ENCODE measurements at regions of chr3 and their contacts with region 1.

Region 1: DNA sequence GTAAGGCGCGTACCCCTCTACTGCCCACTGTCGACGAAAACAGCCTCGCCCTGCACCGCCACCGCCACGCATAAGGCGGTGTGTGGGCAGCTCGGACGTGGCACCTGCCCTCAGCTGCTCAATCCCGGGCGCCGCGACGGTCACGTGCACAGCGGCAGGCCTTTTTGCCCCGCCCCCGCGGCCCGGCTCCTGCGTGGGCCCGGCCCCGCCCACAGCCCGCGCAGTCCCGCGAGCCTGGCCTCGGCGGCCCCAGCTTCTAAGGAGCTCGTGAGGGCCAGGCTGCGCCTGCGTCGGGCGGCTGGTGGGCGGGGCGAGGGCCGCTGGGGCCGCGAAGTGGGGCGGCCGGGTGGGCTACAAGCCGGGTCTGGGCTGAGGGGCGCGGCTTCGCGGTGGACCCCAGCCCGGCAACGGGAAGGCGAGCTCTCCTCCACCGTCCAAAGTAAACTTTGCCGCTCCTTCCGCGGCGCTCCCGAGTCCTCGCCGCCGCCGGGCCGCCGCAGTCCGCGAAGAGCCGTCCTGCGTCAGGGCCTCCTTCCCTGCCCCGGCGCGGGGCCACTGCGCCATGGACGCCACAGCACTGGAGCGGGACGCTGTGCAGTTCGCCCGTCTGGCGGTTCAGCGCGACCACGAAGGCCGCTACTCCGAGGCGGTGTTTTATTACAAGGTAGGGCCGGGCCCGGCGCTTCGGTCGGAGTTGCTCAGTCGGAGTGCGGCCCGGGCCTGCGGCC is at the start of gene CAPN7:
- DNase-seq: peak; percentile 97
- ATAC-seq: peak; percentile 90 to 98 (median 91)
- H3K4me3 ChIP-seq: peak within 1 kb of the TSS; percentile 71
- H3K4me3 Mint-ChIP-seq: peak within 1 kb of the TSS; percentile 92
- H3K27ac ChIP-seq: peak within 1 kb of the TSS; percentile 88
- H3K27ac Mint-ChIP-seq: peak within 1 kb of the TSS; percentile 93 to 96
- H3K4me1 ChIP-seq: peaks cover 13% of the 10 kb centered on the region
- H3K4me1 Mint-ChIP-seq: peaks cover 24 to 36% of the 10 kb centered on the region in 2 donors
- H3K27me3 ChIP-seq: no peaks in the 10 kb centered on the region
- H3K27me3 Mint-ChIP-seq: no peaks in the 10 kb centered on the region
- CTCF ChIP-seq: peak; percentile 15
- total RNA-seq, gene CAPN7: 35.3 to 59.9 (median 52.8) TPM

Region 2: DNA sequence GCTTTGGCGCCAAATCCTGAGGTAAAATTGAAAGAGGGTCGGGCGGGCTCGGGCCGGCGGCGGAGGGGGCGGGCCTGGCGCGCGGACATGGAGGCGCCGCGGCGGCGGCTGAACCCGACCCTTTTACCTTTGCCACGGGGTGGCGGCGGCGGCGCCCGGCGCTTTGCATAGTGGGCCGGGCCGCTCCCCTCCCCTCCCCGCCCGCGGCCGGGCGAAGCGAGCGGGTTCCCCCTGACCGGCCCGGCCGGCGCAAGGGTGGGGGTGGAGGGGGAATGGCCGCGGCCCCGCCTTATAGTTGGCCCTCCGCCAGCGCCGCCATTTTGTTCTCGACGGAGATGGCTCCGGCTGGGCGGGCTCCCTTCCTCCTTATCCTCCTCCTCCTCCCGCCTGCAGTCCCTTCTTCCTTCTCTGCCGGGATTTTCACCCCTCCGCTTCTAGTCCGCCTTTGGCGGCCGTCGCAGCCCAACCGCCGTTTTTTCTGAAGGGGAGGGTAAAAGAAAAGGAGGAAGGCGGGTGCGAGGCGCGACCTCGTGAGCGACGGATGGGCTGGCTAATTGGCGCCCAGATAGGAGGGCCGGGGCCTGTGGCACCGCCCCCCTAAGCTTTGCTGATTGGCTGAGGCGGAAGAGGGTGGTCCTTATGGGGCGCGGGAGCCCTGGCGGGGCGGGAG is 258.1 kb before region 1 on chr3:
- intact Hi-C with region 1: loop called (anchors 2 kb)
- DNase-seq: peak; percentile 98
- ATAC-seq: peak; percentile 85 to 95 (median 86)
- H3K4me3 ChIP-seq: peak overlapping the region; percentile 100
- H3K4me3 Mint-ChIP-seq: peak overlapping the region; percentile 98
- H3K27ac ChIP-seq: peak overlapping the region; percentile 100
- H3K27ac Mint-ChIP-seq: peak overlapping the region; percentile 98 to 100
- H3K4me1 ChIP-seq: peaks cover 13% of the 10 kb centered on the region
- H3K4me1 Mint-ChIP-seq: peaks cover 35 to 49% of the 10 kb centered on the region in 2 donors
- H3K27me3 ChIP-seq: no peaks in the 10 kb centered on the region
- H3K27me3 Mint-ChIP-seq: no peaks in the 10 kb centered on the region
- CTCF ChIP-seq: no peak

Region 3: DNA sequence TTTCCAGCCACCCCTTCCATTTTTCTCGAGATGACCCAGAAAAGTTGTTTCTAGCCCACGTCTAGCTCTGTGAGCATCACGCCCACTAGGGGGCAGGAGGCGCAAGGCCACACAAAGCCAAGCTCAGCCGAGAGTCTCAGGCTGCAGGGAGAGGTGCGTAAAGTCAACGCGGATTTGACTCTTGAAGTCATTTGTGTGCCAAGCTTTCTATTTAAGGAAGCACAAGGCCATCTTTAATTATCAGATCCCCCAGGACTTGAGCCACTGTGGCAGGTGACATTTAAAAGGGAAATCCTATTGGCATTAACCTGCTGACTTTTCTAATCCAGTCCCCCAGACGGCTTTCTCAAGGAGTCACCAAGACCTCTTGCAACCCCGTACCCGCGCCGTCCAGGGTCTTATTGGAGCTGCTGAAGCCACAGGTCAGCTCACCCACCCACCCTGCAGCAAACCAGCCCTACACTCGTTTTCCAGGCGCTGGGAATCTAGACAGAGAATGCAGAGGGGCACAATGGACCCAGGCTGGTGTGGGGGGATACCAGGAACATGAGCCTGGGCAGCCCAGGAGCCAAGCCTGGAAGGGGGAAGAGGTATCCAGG is 62.0 kb after region 1 on chr3:
- intact Hi-C with region 1: loop called (anchors 2 kb)
- DNase-seq: peak; percentile 78 to 94
- ATAC-seq: peak; percentile 55 to 78 (median 59)
- H3K4me3 ChIP-seq: no peak overlapping the region
- H3K4me3 Mint-ChIP-seq: peak overlapping the region; percentile 21
- H3K27ac ChIP-seq: no peak overlapping the region
- H3K27ac Mint-ChIP-seq: peak overlapping the region; percentile 92 to 98
- H3K4me1 ChIP-seq: peaks cover 82% of the 10 kb centered on the region
- H3K4me1 Mint-ChIP-seq: peaks cover 86 to 88% of the 10 kb centered on the region in 2 donors
- H3K27me3 ChIP-seq: no peaks in the 10 kb centered on the region
- H3K27me3 Mint-ChIP-seq: no peaks in the 10 kb centered on the region
- CTCF ChIP-seq: peak; percentile 96

Region 4: GRCh38 chr3:15405448-15406050 is 199.5 kb after region 1 on chr3:
- intact Hi-C with region 1: loop called (anchors 1 kb)
- DNase-seq: peak in 1 of 2 donors; percentile 78
- ATAC-seq: peak; percentile 57 to 78 (median 74)
- H3K4me3 ChIP-seq: no peak overlapping the region
- H3K4me3 Mint-ChIP-seq: no peak overlapping the region
- H3K27ac ChIP-seq: no peak overlapping the region
- H3K27ac Mint-ChIP-seq: no peak overlapping the region
- H3K4me1 ChIP-seq: no peaks in the 10 kb centered on the region
- H3K4me1 Mint-ChIP-seq: no peaks in the 10 kb centered on the region
- H3K27me3 ChIP-seq: no peaks in the 10 kb centered on the region
- H3K27me3 Mint-ChIP-seq: no peaks in the 10 kb centered on the region
- CTCF ChIP-seq: peak; percentile 73

Region 5: GRCh38 chr3:15815696-15816095 is 609.6 kb after region 1 on chr3:
- intact Hi-C with region 1: loop called (anchors 10 kb)
- DNase-seq: peak in 1 of 2 donors; percentile 66
- ATAC-seq: peak in 2 of 3 donors; percentile 59 to 66
- H3K4me3 ChIP-seq: no peak overlapping the region
- H3K4me3 Mint-ChIP-seq: no peak overlapping the region
- H3K27ac ChIP-seq: no peak overlapping the region
- H3K27ac Mint-ChIP-seq: peak overlapping the region in 1 of 2 donors; percentile 24
- H3K4me1 ChIP-seq: peaks cover 7% of the 10 kb centered on the region
- H3K4me1 Mint-ChIP-seq: peaks cover 9 to 16% of the 10 kb centered on the region in 2 donors
- H3K27me3 ChIP-seq: no peaks in the 10 kb centered on the region
- H3K27me3 Mint-ChIP-seq: no peaks in the 10 kb centered on the region
- CTCF ChIP-seq: peak; percentile 42

Measured in natural killer cell (primary cell).